ENCODE measurements at regions of chr17 and their contacts with region 1.

Region 1: GRCh38 chr17:46061435-46061834 is 62.4 kb downstream of the STH start:
- DNase-seq: no peak
- H3K4me3 ChIP-seq: no peak overlapping the region
- H3K27ac ChIP-seq: no peak overlapping the region
- H3K4me1 ChIP-seq: peaks cover 12 to 61% (median 49%) of the 10 kb centered on the region in 4 donors
- H3K27me3 ChIP-seq: no peaks in the 10 kb centered on the region
- CTCF ChIP-seq: peak in 2 of 3 experiments; percentile 20 to 31
- EP300 ChIP-seq: no peak
- POLR2A ChIP-seq: no peak

Region 2: GRCh38 chr17:46182961-46183360 is 121.5 kb after region 1 on chr17:
- intact Hi-C with region 1: loop called (anchors 5 kb)
- DNase-seq: no peak
- H3K4me3 ChIP-seq: no peak overlapping the region
- H3K27ac ChIP-seq: no peak overlapping the region
- H3K4me1 ChIP-seq: peaks cover 84 to 100% (median 98%) of the 10 kb centered on the region in 4 donors
- H3K27me3 ChIP-seq: no peaks in the 10 kb centered on the region
- CTCF ChIP-seq: no peak
- EP300 ChIP-seq: no peak
- POLR2A ChIP-seq: no peak